ENCODE measurements at regions of chr4 and their contacts with region 1.

Region 1: GRCh38 chr4:83639849-83640493 is 104.1 kb downstream of the GPAT3 start:
- DNase-seq: peak; percentile 81
- ATAC-seq: peak; percentile 71
- H3K4me3 ChIP-seq: no peak overlapping the region
- H3K4me3 Mint-ChIP-seq: no peak overlapping the region
- H3K27ac ChIP-seq: no peak overlapping the region
- H3K27ac Mint-ChIP-seq: no peak overlapping the region
- H3K4me1 ChIP-seq: no peaks in the 10 kb centered on the region
- H3K4me1 Mint-ChIP-seq: no peaks in the 10 kb centered on the region
- H3K27me3 ChIP-seq: peaks cover 0 to 2% (median 0%) of the 10 kb centered on the region in 4 experiments
- H3K27me3 Mint-ChIP-seq: peaks cover 4% of the 10 kb centered on the region
- CTCF ChIP-seq: peak; percentile 93

Region 2: DNA sequence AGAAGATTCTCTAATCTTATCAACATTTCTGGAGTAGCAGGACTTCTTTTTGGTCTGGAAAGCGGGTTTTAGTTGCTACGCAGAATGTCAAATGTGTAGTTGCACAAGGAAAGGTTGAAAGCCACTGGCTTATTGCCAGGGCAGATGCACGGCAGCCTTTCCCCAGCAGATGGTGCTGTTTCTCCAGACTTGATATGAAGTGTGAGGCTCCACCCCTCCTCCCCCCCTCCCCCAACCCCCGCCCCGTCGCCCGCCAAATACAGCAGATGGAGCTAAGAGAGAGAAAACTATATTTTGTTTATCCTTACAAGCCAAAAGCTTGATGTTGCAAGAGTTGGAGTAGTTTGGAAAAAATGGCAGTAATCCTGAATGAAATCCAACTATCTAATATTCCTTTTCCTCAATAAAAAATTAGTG is 1177.5 kb before region 1 on chr4:
- CTCF ChIA-PET with region 1: no interaction called
- POLR2A ChIA-PET with region 1: no interaction called
- intact Hi-C with region 1: loop called (anchors 1 kb)
- DNase-seq: peak; percentile 86
- ATAC-seq: peak; percentile 98
- H3K4me3 ChIP-seq: no peak overlapping the region
- H3K4me3 Mint-ChIP-seq: no peak overlapping the region
- H3K27ac ChIP-seq: no peak overlapping the region
- H3K27ac Mint-ChIP-seq: no peak overlapping the region
- H3K4me1 ChIP-seq: peaks cover 5 to 8% of the 10 kb centered on the region in 2 donors
- H3K4me1 Mint-ChIP-seq: peaks cover 25% of the 10 kb centered on the region
- H3K27me3 ChIP-seq: no peaks in the 10 kb centered on the region
- H3K27me3 Mint-ChIP-seq: no peaks in the 10 kb centered on the region
- CTCF ChIP-seq: peak; percentile 87

Region 3: DNA sequence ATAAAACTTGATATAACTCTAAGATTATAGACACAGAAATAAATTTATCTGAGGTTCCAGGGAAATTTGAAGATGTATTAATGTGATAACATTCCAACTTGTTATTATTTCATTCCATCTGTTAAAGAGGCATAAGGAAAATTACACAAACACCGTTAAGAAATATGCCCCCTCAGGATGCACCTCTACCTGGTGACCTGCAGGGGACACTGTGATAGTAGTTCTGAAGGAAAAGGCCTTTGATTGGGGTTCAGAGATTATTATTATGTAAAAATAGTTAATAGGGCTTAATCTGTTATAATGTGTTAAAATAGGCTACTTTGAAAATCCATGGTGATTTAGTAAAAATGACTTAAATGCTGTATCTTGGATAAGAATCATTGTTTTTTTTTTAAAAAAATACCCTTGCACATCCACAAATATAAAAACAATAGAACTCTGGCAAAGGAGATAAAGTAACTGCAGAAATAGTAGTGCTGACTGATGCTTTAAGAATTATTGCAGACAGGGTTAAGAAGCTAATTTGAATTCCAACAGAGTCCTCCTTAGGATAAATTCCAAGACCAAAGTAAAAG is 149.0 kb before region 1 on chr4:
- CTCF ChIA-PET with region 1: interaction called, 18 read pairs
- POLR2A ChIA-PET with region 1: no interaction called
- intact Hi-C with region 1: loop called (anchors 1 kb)
- DNase-seq: peak; percentile 46
- ATAC-seq: peak; percentile 53
- H3K4me3 ChIP-seq: no peak overlapping the region
- H3K4me3 Mint-ChIP-seq: no peak overlapping the region
- H3K27ac ChIP-seq: no peak overlapping the region
- H3K27ac Mint-ChIP-seq: no peak overlapping the region
- H3K4me1 ChIP-seq: no peaks in the 10 kb centered on the region
- H3K4me1 Mint-ChIP-seq: peaks cover 2% of the 10 kb centered on the region
- H3K27me3 ChIP-seq: no peaks in the 10 kb centered on the region
- H3K27me3 Mint-ChIP-seq: no peaks in the 10 kb centered on the region
- CTCF ChIP-seq: peak; percentile 97

Region 4: GRCh38 chr4:83510442-83510841 is 129.5 kb before region 1 on chr4:
- CTCF ChIA-PET with region 1: interaction called, 86 read pairs
- POLR2A ChIA-PET with region 1: no interaction called
- intact Hi-C with region 1: loop called (anchors 1 kb)
- DNase-seq: no peak
- ATAC-seq: no peak
- H3K4me3 ChIP-seq: no peak overlapping the region
- H3K4me3 Mint-ChIP-seq: no peak overlapping the region
- H3K27ac ChIP-seq: no peak overlapping the region
- H3K27ac Mint-ChIP-seq: no peak overlapping the region
- H3K4me1 ChIP-seq: no peaks in the 10 kb centered on the region
- H3K4me1 Mint-ChIP-seq: no peaks in the 10 kb centered on the region
- H3K27me3 ChIP-seq: no peaks in the 10 kb centered on the region
- H3K27me3 Mint-ChIP-seq: no peaks in the 10 kb centered on the region
- CTCF ChIP-seq: no peak

Region 5: GRCh38 chr4:83658806-83659495 is 19.0 kb after region 1 on chr4:
- CTCF ChIA-PET with region 1: interaction called, 32 read pairs
- POLR2A ChIA-PET with region 1: no interaction called
- intact Hi-C with region 1: no loop called
- DNase-seq: no peak
- ATAC-seq: no peak
- H3K4me3 ChIP-seq: no peak overlapping the region
- H3K4me3 Mint-ChIP-seq: no peak overlapping the region
- H3K27ac ChIP-seq: no peak overlapping the region
- H3K27ac Mint-ChIP-seq: no peak overlapping the region
- H3K4me1 ChIP-seq: no peaks in the 10 kb centered on the region
- H3K4me1 Mint-ChIP-seq: peaks cover 2% of the 10 kb centered on the region
- H3K27me3 ChIP-seq: no peaks in the 10 kb centered on the region
- H3K27me3 Mint-ChIP-seq: peaks cover 17% of the 10 kb centered on the region
- CTCF ChIP-seq: no peak